B cell (primary cell): ENCODE measurements at regions of chr13 and their contacts with region 1.

Region 1: GRCh38 chr13:41652727-41653361 is 195.5 kb downstream of the RGCC start:
- DNase-seq: peak; percentile 39
- ATAC-seq: no peak
- H3K4me3 ChIP-seq: no peak overlapping the region
- H3K4me3 Mint-ChIP-seq: no peak overlapping the region
- H3K27ac ChIP-seq: no peak overlapping the region
- H3K27ac Mint-ChIP-seq: no peak overlapping the region
- H3K4me1 ChIP-seq: peaks cover 10 to 12% of the 10 kb centered on the region in 2 donors
- H3K4me1 Mint-ChIP-seq: peaks cover 10% of the 10 kb centered on the region
- H3K27me3 ChIP-seq: peaks cover 0 to 39% (median 21%) of the 10 kb centered on the region in 4 experiments
- H3K27me3 Mint-ChIP-seq: peaks cover 54% of the 10 kb centered on the region
- CTCF ChIP-seq: peak; percentile 59

Region 2: DNA sequence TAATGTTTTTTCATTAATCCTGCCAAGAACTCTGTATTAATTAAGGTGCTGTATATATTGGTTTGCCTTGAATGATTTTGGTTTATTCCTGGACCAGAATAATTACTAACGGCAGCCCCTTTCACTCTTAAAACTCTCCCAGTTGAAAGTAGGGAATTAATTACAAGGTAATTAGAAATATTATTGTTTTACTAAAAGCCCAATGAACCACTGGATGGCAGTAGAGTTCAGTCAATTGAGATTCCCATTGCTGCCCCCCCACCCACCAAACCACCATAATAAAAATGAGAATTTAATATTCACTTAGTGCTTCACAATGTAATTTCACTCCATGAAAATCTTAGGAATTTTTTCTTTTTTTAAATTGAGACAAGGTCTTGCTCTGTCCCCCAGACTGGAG is 577.8 kb before region 1 on chr13:
- CTCF ChIA-PET with region 1: interaction called, 5 read pairs
- POLR2A ChIA-PET with region 1: no interaction called
- intact Hi-C with region 1: loop called (anchors 5 kb)
- DNase-seq: peak; percentile 71
- ATAC-seq: peak; percentile 43
- H3K4me3 ChIP-seq: no peak overlapping the region
- H3K4me3 Mint-ChIP-seq: no peak overlapping the region
- H3K27ac ChIP-seq: no peak overlapping the region
- H3K27ac Mint-ChIP-seq: no peak overlapping the region
- H3K4me1 ChIP-seq: no peaks in the 10 kb centered on the region
- H3K4me1 Mint-ChIP-seq: peaks cover 5% of the 10 kb centered on the region
- H3K27me3 ChIP-seq: no peaks in the 10 kb centered on the region
- H3K27me3 Mint-ChIP-seq: no peaks in the 10 kb centered on the region
- CTCF ChIP-seq: peak; percentile 79

Region 3: GRCh38 chr13:41352935-41353840 is 299.7 kb before region 1 on chr13:
- CTCF ChIA-PET with region 1: interaction called, 14 read pairs
- POLR2A ChIA-PET with region 1: no interaction called
- intact Hi-C with region 1: no loop called
- DNase-seq: peak; percentile 69
- ATAC-seq: peak; percentile 53
- H3K4me3 ChIP-seq: no peak overlapping the region
- H3K4me3 Mint-ChIP-seq: no peak overlapping the region
- H3K27ac ChIP-seq: no peak overlapping the region
- H3K27ac Mint-ChIP-seq: no peak overlapping the region
- H3K4me1 ChIP-seq: no peaks in the 10 kb centered on the region
- H3K4me1 Mint-ChIP-seq: peaks cover 4% of the 10 kb centered on the region
- H3K27me3 ChIP-seq: no peaks in the 10 kb centered on the region
- H3K27me3 Mint-ChIP-seq: no peaks in the 10 kb centered on the region
- CTCF ChIP-seq: peak; percentile 94

Region 4: GRCh38 chr13:41384755-41385503 is 267.9 kb before region 1 on chr13:
- CTCF ChIA-PET with region 1: interaction called, 10 read pairs
- POLR2A ChIA-PET with region 1: no interaction called
- intact Hi-C with region 1: no loop called
- DNase-seq: no peak
- ATAC-seq: no peak
- H3K4me3 ChIP-seq: no peak overlapping the region
- H3K4me3 Mint-ChIP-seq: no peak overlapping the region
- H3K27ac ChIP-seq: no peak overlapping the region
- H3K27ac Mint-ChIP-seq: no peak overlapping the region
- H3K4me1 ChIP-seq: no peaks in the 10 kb centered on the region
- H3K4me1 Mint-ChIP-seq: no peaks in the 10 kb centered on the region
- H3K27me3 ChIP-seq: peaks cover 0 to 4% (median 1%) of the 10 kb centered on the region in 4 experiments
- H3K27me3 Mint-ChIP-seq: peaks cover 19% of the 10 kb centered on the region
- CTCF ChIP-seq: no peak

Region 5: GRCh38 chr13:41411522-41411921 is 241.3 kb before region 1 on chr13:
- CTCF ChIA-PET with region 1: interaction called, 27 read pairs
- POLR2A ChIA-PET with region 1: no interaction called
- intact Hi-C with region 1: loop called (anchors 1 kb)
- DNase-seq: peak; percentile 29
- ATAC-seq: no peak
- H3K4me3 ChIP-seq: no peak overlapping the region
- H3K4me3 Mint-ChIP-seq: no peak overlapping the region
- H3K27ac ChIP-seq: no peak overlapping the region
- H3K27ac Mint-ChIP-seq: no peak overlapping the region
- H3K4me1 ChIP-seq: no peaks in the 10 kb centered on the region
- H3K4me1 Mint-ChIP-seq: no peaks in the 10 kb centered on the region
- H3K27me3 ChIP-seq: no peaks in the 10 kb centered on the region
- H3K27me3 Mint-ChIP-seq: peaks cover 23% of the 10 kb centered on the region
- CTCF ChIP-seq: no peak

Region 6: DNA sequence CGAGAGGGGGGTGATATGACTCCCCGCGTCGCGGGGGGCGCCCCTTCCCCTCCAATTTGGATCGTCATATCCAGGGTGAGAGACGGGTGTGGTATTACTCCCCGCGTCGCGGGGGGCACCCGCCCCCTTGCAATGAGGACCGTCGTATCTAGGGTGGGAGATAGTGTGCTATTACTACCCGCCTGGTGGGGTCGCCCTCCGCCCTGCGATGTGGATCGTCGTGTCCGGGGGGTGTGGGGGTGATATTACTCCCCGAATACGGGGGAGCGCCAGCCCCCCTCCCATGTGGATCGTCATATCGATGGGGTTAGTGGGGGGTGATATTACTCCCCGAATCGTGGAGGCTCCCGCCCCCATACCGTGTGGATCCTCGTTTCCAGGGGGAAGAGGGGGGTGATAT is 224.7 kb before region 1 on chr13:
- CTCF ChIA-PET with region 1: no interaction called
- POLR2A ChIA-PET with region 1: no interaction called
- intact Hi-C with region 1: loop called (anchors 1 kb)
- DNase-seq: peak; percentile 25
- ATAC-seq: peak; percentile 47
- H3K4me3 ChIP-seq: no peak overlapping the region
- H3K4me3 Mint-ChIP-seq: no peak overlapping the region
- H3K27ac ChIP-seq: no peak overlapping the region
- H3K27ac Mint-ChIP-seq: no peak overlapping the region
- H3K4me1 ChIP-seq: peaks cover 0 to 9% of the 10 kb centered on the region in 2 donors
- H3K4me1 Mint-ChIP-seq: peaks cover 4% of the 10 kb centered on the region
- H3K27me3 ChIP-seq: peaks cover 0 to 11% (median 0%) of the 10 kb centered on the region in 4 experiments
- H3K27me3 Mint-ChIP-seq: peaks cover 23% of the 10 kb centered on the region
- CTCF ChIP-seq: peak; percentile 42

Region 7: GRCh38 chr13:41456768-41457588 is 195.9 kb before region 1 on chr13 and contains the start of gene RGCC:
- CTCF ChIA-PET with region 1: interaction called, 8 read pairs
- POLR2A ChIA-PET with region 1: no interaction called
- intact Hi-C with region 1: loop called (anchors 2 kb)
- DNase-seq: peak; percentile 89
- ATAC-seq: peak; percentile 75
- H3K4me3 ChIP-seq: peak within 1 kb of the TSS; percentile 25 to 71 (median 60)
- H3K4me3 Mint-ChIP-seq: peak within 1 kb of the TSS; percentile 82
- H3K27ac ChIP-seq: peak within 1 kb of the TSS in 1 of 2 donors; percentile 49
- H3K27ac Mint-ChIP-seq: peak within 1 kb of the TSS; percentile 32
- H3K4me1 ChIP-seq: peaks cover 27% of the 10 kb centered on the region in 2 donors
- H3K4me1 Mint-ChIP-seq: peaks cover 28% of the 10 kb centered on the region
- H3K27me3 ChIP-seq: peaks cover 0 to 48% (median 15%) of the 10 kb centered on the region in 4 experiments
- H3K27me3 Mint-ChIP-seq: peaks cover 38% of the 10 kb centered on the region
- CTCF ChIP-seq: no peak
- total RNA-seq, gene RGCC: 6.5 and 8.0 TPM in 2 replicates